ENCODE measurements at regions of chr17 and their contacts with region 1.

Region 1: GRCh38 chr17:9676742-9677387 is 31.5 kb downstream of the USP43 start:
- DNase-seq: peak; percentile 62
- H3K4me3 Mint-ChIP-seq: no peak overlapping the region
- H3K27ac Mint-ChIP-seq: peak overlapping the region; percentile 52
- H3K4me1 Mint-ChIP-seq: peaks cover 24% of the 10 kb centered on the region
- H3K27me3 Mint-ChIP-seq: no peaks in the 10 kb centered on the region
- CTCF ChIP-seq: no peak

Region 2: DNA sequence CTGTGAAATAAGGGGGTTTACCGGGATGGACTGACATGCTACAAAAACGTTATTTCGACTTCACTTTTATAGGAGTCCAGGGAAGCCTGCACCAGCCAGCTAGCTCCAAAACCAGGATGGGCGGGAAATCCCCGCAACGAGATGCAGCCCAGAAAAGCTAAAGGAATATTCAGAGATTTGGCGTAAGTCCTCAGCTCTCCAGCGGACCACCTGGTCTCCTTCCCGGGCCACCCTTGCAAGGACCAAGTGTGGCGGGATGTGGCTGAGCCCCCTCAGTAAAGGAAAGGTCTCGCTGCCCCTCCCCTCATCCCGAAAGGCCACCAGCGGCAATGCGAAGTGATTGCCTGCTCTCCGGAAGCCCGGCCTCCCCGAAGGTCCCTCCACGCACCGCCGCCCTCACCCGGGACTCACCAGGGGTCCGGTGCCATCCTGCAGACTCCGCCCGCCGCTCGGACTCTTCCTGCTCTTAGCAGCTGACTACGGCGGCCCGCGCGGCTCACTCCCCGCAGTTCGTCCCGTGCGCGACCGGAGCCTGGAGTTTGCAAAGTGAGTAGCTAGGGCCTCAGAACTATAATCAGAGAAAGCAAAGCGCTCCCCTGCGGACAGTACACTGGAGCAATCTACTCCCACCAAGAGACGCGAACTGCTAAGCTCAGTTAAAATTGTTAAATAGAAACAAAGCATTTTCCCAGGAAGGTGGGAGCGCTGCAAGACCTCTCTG is 101.3 kb before region 1 on chr17 and contains the start of gene STX8:
- CTCF ChIA-PET with region 1: no interaction called
- intact Hi-C with region 1: loop called (anchors 10 kb)
- DNase-seq: peak; percentile 85
- H3K4me3 Mint-ChIP-seq: peak within 1 kb of the TSS; percentile 100
- H3K27ac Mint-ChIP-seq: peak within 1 kb of the TSS; percentile 88
- H3K4me1 Mint-ChIP-seq: peaks cover 14% of the 10 kb centered on the region
- H3K27me3 Mint-ChIP-seq: no peaks in the 10 kb centered on the region
- CTCF ChIP-seq: no peak
- total RNA-seq, gene STX8: 31.6 and 32.4 TPM in 2 replicates

Region 3: DNA sequence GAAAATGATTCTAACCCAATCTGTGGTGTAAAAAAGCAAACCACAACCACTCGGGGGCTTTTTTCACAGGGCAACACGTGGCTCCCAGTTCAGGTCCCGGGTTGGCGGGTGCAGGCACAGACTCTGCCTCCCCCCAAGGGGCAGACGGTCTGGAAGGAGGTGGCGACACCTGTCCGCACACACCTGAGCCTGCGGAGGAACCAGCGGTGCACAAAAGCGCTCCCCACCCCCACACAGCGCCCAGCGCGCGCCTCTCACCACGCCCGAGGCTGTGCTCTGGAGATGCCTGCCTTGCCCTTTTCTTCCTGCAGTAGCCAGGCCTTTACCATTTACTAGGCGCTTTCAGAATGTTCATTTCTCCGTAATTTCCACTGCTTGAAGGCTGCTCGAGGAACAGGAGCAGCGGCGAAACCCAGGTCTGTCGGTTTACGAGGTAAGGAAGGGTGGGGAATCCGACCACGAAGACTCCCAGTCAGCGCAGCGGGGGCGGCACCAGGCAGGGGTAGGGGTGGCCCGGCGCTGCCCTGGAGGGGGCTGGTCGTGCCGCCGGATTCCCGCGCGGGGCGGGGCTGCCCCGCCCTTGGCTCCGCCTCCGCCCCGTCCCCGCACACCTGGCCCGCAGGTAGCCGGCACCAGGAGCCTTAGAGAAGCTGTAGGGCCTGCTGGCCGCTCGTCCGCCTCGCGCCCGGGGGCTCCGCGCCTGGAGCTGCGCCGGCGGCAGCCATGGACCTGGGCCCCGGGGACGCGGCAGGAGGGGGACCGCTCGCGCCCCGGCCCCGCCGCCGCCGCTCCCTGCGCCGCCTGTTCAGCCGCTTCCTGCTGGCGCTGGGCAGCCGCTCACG is 31.7 kb before region 1 on chr17 and contains the start of gene USP43:
- CTCF ChIA-PET with region 1: no interaction called
- intact Hi-C with region 1: loop called (anchors 2 kb)
- DNase-seq: peak; percentile 78
- H3K4me3 Mint-ChIP-seq: peak within 1 kb of the TSS; percentile 93
- H3K27ac Mint-ChIP-seq: peak within 1 kb of the TSS; percentile 91
- H3K4me1 Mint-ChIP-seq: peaks cover 11% of the 10 kb centered on the region
- H3K27me3 Mint-ChIP-seq: no peaks in the 10 kb centered on the region
- CTCF ChIP-seq: no peak
- total RNA-seq, gene USP43: 6.7 and 8.5 TPM in 2 replicates

Region 4: GRCh38 chr17:9817086-9817485 is 140.2 kb after region 1 on chr17:
- CTCF ChIA-PET with region 1: no interaction called
- intact Hi-C with region 1: no loop called
- DNase-seq: peak; percentile 61
- H3K4me3 Mint-ChIP-seq: no peak overlapping the region
- H3K27ac Mint-ChIP-seq: no peak overlapping the region
- H3K4me1 Mint-ChIP-seq: peaks cover 23% of the 10 kb centered on the region
- H3K27me3 Mint-ChIP-seq: no peaks in the 10 kb centered on the region
- CTCF ChIP-seq: no peak

Measured in Calu3 (cell line).